Naive thymus-derived CD4-positive, alpha-beta T cell (primary cell): ENCODE measurements at regions of chr6 and their contacts with region 1.

Region 1: GRCh38 chr6:130105996-130106704 is 87.8 kb downstream of the L3MBTL3 start:
- DNase-seq: no peak
- ATAC-seq: no peak
- H3K4me3 ChIP-seq: no peak overlapping the region
- H3K4me3 Mint-ChIP-seq: no peak overlapping the region
- H3K27ac ChIP-seq: no peak overlapping the region
- H3K27ac Mint-ChIP-seq: peak overlapping the region in 3 of 9 donors; percentile 2 to 76 (median 64)
- H3K4me1 ChIP-seq: no peaks in the 10 kb centered on the region
- H3K4me1 Mint-ChIP-seq: peaks cover 0 to 39% (median 23%) of the 10 kb centered on the region in 7 donors
- H3K27me3 ChIP-seq: no peaks in the 10 kb centered on the region
- H3K27me3 Mint-ChIP-seq: no peaks in the 10 kb centered on the region

Region 2: DNA sequence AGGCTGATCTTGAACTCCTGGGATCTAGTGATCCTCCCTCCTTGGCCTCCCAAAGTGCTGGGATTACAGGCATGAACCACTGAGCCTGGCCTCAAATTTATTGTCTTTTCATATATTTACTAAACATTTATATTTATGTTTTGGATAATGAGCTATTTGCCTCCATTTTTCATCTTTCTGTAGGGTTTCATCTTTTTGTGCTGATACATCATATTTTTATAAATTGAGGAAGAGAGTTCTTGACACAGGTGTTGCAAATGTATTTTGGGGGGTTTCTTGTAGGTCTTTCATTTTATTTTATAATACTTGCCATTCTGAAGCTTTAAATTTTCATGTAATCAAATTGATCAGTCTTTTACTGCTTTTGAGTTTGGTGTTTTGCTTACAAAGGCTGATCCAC is 15.4 kb before region 1 on chr6:
- CTCF ChIA-PET with region 1: no interaction called
- POLR2A ChIA-PET with region 1: no interaction called
- intact Hi-C with region 1: loop called in 1 of 2 experiments (anchors 2 kb)
- DNase-seq: no peak
- ATAC-seq: no peak
- H3K4me3 ChIP-seq: no peak overlapping the region
- H3K4me3 Mint-ChIP-seq: no peak overlapping the region
- H3K27ac ChIP-seq: no peak overlapping the region
- H3K27ac Mint-ChIP-seq: no peak overlapping the region
- H3K4me1 ChIP-seq: no peaks in the 10 kb centered on the region
- H3K4me1 Mint-ChIP-seq: peaks cover 4 to 35% (median 26%) of the 10 kb centered on the region in 7 donors
- H3K27me3 ChIP-seq: no peaks in the 10 kb centered on the region
- H3K27me3 Mint-ChIP-seq: no peaks in the 10 kb centered on the region

Region 3: GRCh38 chr6:130127195-130127594 is 21.0 kb after region 1 on chr6:
- CTCF ChIA-PET with region 1: no interaction called
- POLR2A ChIA-PET with region 1: no interaction called
- intact Hi-C with region 1: loop called in 1 of 2 experiments (anchors 2 kb)
- DNase-seq: no peak
- ATAC-seq: no peak
- H3K4me3 ChIP-seq: no peak overlapping the region
- H3K4me3 Mint-ChIP-seq: peak overlapping the region in 3 of 10 donors; percentile 19 to 62 (median 24)
- H3K27ac ChIP-seq: no peak overlapping the region
- H3K27ac Mint-ChIP-seq: peak overlapping the region in 7 of 9 donors; percentile 16 to 69 (median 33)
- H3K4me1 ChIP-seq: peaks cover 15 to 27% of the 10 kb centered on the region in 2 donors
- H3K4me1 Mint-ChIP-seq: peaks cover 32 to 83% (median 60%) of the 10 kb centered on the region in 7 donors
- H3K27me3 ChIP-seq: no peaks in the 10 kb centered on the region
- H3K27me3 Mint-ChIP-seq: no peaks in the 10 kb centered on the region

Region 4: GRCh38 chr6:130202782-130203181 is 96.6 kb after region 1 on chr6:
- CTCF ChIA-PET with region 1: no interaction called
- POLR2A ChIA-PET with region 1: no interaction called
- intact Hi-C with region 1: no loop called
- DNase-seq: no peak
- ATAC-seq: no peak
- H3K4me3 ChIP-seq: no peak overlapping the region
- H3K4me3 Mint-ChIP-seq: peak overlapping the region in 7 of 10 donors; percentile 22 to 70 (median 56)
- H3K27ac ChIP-seq: no peak overlapping the region
- H3K27ac Mint-ChIP-seq: peak overlapping the region in 7 of 9 donors; percentile 50 to 87 (median 77)
- H3K4me1 ChIP-seq: peaks cover 15 to 49% of the 10 kb centered on the region in 2 donors
- H3K4me1 Mint-ChIP-seq: peaks cover 15 to 92% (median 81%) of the 10 kb centered on the region in 7 donors
- H3K27me3 ChIP-seq: no peaks in the 10 kb centered on the region
- H3K27me3 Mint-ChIP-seq: no peaks in the 10 kb centered on the region

Region 5: GRCh38 chr6:130615816-130616215 is 509.7 kb after region 1 on chr6:
- CTCF ChIA-PET with region 1: no interaction called
- POLR2A ChIA-PET with region 1: no interaction called
- intact Hi-C with region 1: no loop called
- DNase-seq: no peak
- ATAC-seq: no peak
- H3K4me3 ChIP-seq: no peak overlapping the region
- H3K4me3 Mint-ChIP-seq: no peak overlapping the region
- H3K27ac ChIP-seq: no peak overlapping the region
- H3K27ac Mint-ChIP-seq: peak overlapping the region in 1 of 9 donors; percentile 5
- H3K4me1 ChIP-seq: no peaks in the 10 kb centered on the region
- H3K4me1 Mint-ChIP-seq: peaks cover 0 to 11% (median 7%) of the 10 kb centered on the region in 7 donors
- H3K27me3 ChIP-seq: no peaks in the 10 kb centered on the region
- H3K27me3 Mint-ChIP-seq: peaks cover 0 to 2% (median 0%) of the 10 kb centered on the region in 5 donors